ENCODE measurements at regions of chr5 and their contacts with region 1.

Region 1: DNA sequence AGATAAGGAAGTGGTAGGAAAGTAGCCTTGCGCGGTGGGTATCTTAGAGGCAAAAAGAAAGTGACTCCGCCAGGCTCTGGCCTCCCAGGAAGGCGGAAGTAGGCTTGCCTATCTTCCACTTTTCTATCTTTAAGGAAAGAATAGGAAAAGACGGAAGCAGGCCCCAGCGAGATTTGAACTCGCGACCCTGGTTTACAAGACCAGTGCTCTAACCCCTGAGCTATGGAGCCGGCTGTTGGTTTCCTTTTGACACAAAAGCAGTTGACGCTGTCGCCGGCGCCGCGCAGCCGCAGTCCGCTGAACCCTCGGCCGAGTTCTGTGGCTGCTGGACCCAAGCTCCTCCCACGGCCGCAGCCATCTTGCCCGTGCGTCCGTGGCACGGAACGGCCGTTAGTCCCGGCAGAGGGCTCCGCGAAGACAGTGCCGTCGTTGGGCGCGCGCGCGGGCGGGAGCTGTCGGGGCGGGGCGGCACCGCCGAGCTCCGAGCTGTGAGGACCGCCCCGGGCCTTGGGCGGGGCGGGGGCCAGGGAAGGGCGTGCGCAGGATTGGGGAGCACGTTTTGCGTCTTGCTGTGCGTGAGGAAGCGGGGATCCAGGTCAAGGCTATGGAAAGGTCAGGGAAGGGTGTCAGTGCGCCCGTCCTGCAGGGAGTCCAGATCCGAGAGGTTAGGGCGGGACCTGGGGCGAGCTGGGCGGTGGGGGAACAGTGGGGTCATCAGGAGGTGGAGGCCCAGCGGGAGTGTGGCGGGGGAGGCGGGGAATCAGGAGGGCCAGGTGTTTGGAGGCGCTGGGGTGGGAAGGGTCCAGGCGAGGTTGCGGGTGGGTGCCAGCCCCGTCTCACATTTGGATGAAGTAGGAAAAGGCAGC is 13.2 kb downstream of the TRIM7 start:
- DNase-seq: peak; percentile 97
- H3K4me3 ChIP-seq: peak overlapping the region; percentile 60 to 68 (median 64)
- H3K27ac ChIP-seq: peak overlapping the region; percentile 82 to 93 (median 90)
- H3K4me1 ChIP-seq: peaks cover 7 to 33% (median 8%) of the 10 kb centered on the region in 4 donors
- H3K27me3 ChIP-seq: no peaks in the 10 kb centered on the region
- CTCF ChIP-seq: no peak
- EP300 ChIP-seq: no peak
- POLR2A ChIP-seq: peak in 1 of 2 donors; percentile 33

Region 2: DNA sequence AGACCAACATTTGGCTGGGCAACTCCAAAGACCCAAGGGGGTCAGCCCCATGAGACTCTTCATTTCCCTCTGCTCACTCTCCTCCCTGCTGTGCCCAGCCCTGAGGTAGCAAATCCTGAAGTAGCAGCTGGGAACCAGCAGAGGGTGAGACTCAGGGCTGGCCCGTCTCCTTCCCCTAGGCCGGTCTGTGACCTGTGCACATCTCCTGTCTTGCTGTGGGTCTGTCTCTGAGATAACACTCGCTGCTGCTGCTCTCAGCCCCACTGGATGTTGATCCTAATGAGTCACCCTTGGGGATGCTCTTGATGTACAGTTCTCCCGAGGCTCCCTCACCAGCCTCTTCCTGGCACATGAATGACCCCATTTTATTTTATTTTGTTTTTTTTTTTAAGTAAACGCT is 53.5 kb before region 1 on chr5:
- intact Hi-C with region 1: no loop called
- DNase-seq: no peak
- H3K4me3 ChIP-seq: no peak overlapping the region
- H3K27ac ChIP-seq: no peak overlapping the region
- H3K4me1 ChIP-seq: no peaks in the 10 kb centered on the region
- H3K27me3 ChIP-seq: peaks cover 0 to 16% (median 0%) of the 10 kb centered on the region in 3 donors
- CTCF ChIP-seq: no peak
- EP300 ChIP-seq: no peak
- POLR2A ChIP-seq: no peak

Region 3: DNA sequence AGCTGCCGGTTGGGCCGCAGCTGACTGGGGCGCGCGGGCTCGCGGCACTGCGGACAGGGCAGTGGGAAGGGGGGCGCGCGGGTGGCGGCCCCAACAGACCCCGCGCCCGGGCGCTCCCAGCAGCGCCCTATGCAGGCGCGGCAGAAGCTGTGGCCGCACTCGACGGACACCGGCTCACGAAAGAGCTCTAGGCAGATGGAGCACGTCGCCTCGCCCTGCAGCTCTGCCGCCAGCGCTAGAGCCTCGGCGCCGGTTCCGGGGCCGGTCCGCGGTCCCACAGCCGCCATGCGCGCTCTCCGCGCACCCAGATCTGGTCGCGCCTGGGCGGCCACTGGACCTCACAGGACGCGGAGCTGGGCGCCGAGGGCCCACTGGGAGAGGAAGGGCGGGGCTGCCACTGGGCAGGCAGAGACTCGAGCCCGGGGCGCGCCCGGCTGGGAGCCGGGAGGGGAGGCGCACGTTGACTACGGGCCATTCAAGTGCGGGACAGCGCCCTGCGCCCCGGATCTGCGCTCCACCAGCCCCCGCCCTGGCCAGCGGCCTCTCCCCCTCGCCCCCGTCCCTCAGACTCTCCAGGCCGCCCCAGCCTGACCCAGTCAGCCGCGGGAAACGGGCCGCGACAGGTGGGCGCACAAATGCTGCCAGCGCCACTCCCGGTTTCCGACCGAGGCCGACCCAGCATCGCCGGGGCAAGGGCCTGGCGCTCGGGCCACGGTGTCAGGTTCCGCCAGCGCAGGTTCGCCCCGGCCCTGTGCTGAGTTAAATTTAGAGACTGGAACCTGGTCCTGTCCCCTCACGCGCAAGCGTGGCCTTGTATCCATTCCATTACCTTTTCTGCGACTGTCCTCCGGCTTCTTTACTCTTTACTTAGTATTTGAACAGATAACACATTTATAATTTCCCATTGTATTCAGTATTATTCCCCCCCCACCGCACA is 13.3 kb after region 1 on chr5 and contains the start of gene TRIM7:
- intact Hi-C with region 1: loop called (anchors 1 kb)
- DNase-seq: peak; percentile 76
- H3K4me3 ChIP-seq: peak within 1 kb of the TSS; percentile 42 to 71 (median 62)
- H3K27ac ChIP-seq: peak within 1 kb of the TSS; percentile 71 to 85 (median 83)
- H3K4me1 ChIP-seq: peaks cover 0 to 38% (median 36%) of the 10 kb centered on the region in 4 donors
- H3K27me3 ChIP-seq: peaks cover 0 to 12% (median 11%) of the 10 kb centered on the region in 3 donors
- CTCF ChIP-seq: no peak
- EP300 ChIP-seq: no peak
- POLR2A ChIP-seq: no peak
- total RNA-seq, gene TRIM7: 0.55 to 2.1 (median 1.1) TPM

Region 4: GRCh38 chr5:181217803-181218062 is 26.0 kb after region 1 on chr5:
- intact Hi-C with region 1: loop called (anchors 1 kb)
- DNase-seq: no peak
- H3K4me3 ChIP-seq: peak overlapping the region; percentile 30 to 53 (median 43)
- H3K27ac ChIP-seq: peak overlapping the region; percentile 67 to 77 (median 74)
- H3K4me1 ChIP-seq: peaks cover 0 to 37% (median 29%) of the 10 kb centered on the region in 4 donors
- H3K27me3 ChIP-seq: no peaks in the 10 kb centered on the region
- CTCF ChIP-seq: no peak
- EP300 ChIP-seq: no peak
- POLR2A ChIP-seq: no peak

Region 5: GRCh38 chr5:181223058-181223728 is 31.4 kb after region 1 on chr5 and contains the start of gene TRIM41:
- intact Hi-C with region 1: loop called (anchors 1 kb)
- DNase-seq: peak; percentile 100
- H3K4me3 ChIP-seq: peak within 1 kb of the TSS; percentile 61 to 80 (median 70)
- H3K27ac ChIP-seq: peak within 1 kb of the TSS; percentile 96 to 98 (median 96)
- H3K4me1 ChIP-seq: peaks cover 4 to 33% (median 21%) of the 10 kb centered on the region in 4 donors
- H3K27me3 ChIP-seq: no peaks in the 10 kb centered on the region
- CTCF ChIP-seq: no peak
- EP300 ChIP-seq: peak in 2 of 4 donors; percentile 12 to 22
- POLR2A ChIP-seq: peak; percentile 91 to 95
- total RNA-seq, gene TRIM41: 8.2 to 15.3 (median 11.8) TPM

Region 6: GRCh38 chr5:181260387-181261319 is 68.9 kb after region 1 on chr5 and contains the start of gene TRIM52:
- intact Hi-C with region 1: loop called (anchors 2 kb)
- DNase-seq: peak; percentile 93
- H3K4me3 ChIP-seq: peak within 1 kb of the TSS; percentile 71 to 98 (median 86)
- H3K27ac ChIP-seq: peak within 1 kb of the TSS; percentile 94 to 100 (median 100)
- H3K4me1 ChIP-seq: peaks cover 0 to 54% (median 43%) of the 10 kb centered on the region in 4 donors
- H3K27me3 ChIP-seq: no peaks in the 10 kb centered on the region
- CTCF ChIP-seq: no peak
- EP300 ChIP-seq: no peak
- POLR2A ChIP-seq: peak; percentile 86 to 88
- total RNA-seq, gene TRIM52: 7.1 to 26.9 (median 16.0) TPM